ACHN (cell line): ENCODE measurements at regions of chr2 and their contacts with region 1.

Region 1: GRCh38 chr2:70647873-70648481 is 94.4 kb upstream of the TGFA start:
- DNase-seq: peak; percentile 75

Region 2: DNA sequence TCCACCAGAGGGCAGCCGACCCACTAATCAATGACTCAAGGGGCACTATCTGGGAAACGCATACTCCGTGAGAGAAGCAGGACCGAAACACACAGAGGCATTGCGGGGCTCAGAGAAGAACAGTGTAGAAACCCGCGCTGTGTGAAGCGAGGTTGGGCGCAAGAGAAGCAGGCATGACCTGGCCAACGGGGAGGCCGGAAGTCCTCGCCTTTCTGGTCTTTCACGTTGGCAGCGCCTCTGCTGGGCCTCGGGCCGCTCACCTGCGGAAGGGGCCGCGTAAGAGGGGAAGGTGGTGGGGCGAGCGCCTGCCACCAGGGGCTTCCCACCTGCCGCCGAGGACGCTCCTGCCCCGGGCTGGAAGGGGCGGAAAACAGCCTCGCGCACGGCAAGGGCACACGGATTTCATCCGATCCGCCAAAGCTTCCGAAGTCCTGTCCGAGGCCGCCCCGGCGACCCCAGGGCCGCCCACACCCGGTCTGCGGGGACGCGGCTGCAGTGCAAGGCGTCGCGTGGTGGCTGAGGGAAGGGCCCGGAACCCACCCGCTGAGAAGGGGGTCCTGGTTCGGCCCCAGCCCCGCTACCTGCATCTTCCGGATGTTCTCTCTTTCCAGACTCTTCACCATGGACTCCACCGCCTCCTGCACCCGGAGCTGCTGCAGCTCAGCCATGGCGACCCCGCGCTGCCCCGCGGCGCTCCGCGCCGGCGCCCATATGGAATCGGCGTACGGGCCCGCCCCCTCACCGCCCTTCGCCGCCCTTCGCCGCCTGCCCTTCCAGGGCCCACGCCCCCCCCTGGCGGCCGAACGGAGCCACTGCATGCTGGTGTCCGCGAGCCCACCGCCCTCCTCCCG is 346.4 kb before region 1 on chr2 and contains the start of gene FAM136A:
- in situ Hi-C with region 1: loop called (anchors 25 kb)
- DNase-seq: peak; percentile 84